ENCODE measurements at regions of chr6 and their contacts with region 1.

Region 1: GRCh38 chr6:41182069-41183034 is 18.6 kb downstream of the TREML2 start:
- DNase-seq: peak; percentile 75
- H3K4me3 Mint-ChIP-seq: no peak overlapping the region
- H3K27ac Mint-ChIP-seq: no peak overlapping the region
- H3K4me1 Mint-ChIP-seq: peaks cover 45% of the 10 kb centered on the region
- H3K27me3 Mint-ChIP-seq: peaks cover 19% of the 10 kb centered on the region

Region 2: GRCh38 chr6:41092421-41093140 is 89.8 kb before region 1 on chr6:
- CTCF ChIA-PET with region 1: interaction called, 58 read pairs
- DNase-seq: no peak
- H3K4me3 Mint-ChIP-seq: no peak overlapping the region
- H3K27ac Mint-ChIP-seq: no peak overlapping the region
- H3K4me1 Mint-ChIP-seq: no peaks in the 10 kb centered on the region
- H3K27me3 Mint-ChIP-seq: no peaks in the 10 kb centered on the region